Colonic mucosa (tissue), 4 donors: ENCODE measurements at regions of chr9 and their contacts with region 1.

Region 1: GRCh38 chr9:19028835-19029451 is 4.1 kb downstream of the SAXO1 start:
- DNase-seq: peak; percentile 62
- H3K4me3 ChIP-seq: no peak overlapping the region
- H3K27ac ChIP-seq: no peak overlapping the region
- H3K4me1 ChIP-seq: no peaks in the 10 kb centered on the region
- H3K27me3 ChIP-seq: no peaks in the 10 kb centered on the region
- CTCF ChIP-seq: peak; percentile 75

Region 2: DNA sequence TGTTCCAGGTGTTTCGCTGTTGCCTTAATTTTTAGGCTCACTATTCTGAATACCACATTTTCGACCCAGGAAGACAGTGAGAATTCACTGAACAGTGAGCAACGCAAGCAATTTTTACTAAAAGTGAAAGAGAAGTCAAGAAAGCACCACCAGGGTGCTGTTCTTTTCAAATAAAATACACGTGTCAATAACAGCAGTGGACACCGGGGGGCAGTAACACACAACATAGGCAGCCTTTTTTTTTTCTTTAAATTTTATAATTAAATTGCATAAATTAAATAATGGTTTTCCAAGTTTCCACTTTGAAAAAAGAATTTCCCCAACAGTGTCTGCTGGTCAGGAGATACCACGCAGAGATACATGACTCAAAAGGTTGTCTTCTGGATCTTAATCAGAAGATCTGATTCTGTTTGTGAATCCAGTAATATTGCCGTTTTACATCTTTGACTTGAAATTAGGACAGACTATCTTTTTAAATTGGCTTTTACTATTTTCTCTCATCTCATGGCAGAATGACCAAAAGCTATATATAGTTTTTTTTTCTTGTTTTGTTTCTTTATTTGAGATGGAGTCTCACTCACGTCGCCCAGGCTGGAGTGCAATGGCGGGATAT is 1497.2 kb before region 1 on chr9:
- intact Hi-C with region 1: loop called (anchors 10 kb)
- DNase-seq: peak; percentile 50
- H3K4me3 ChIP-seq: no peak overlapping the region
- H3K27ac ChIP-seq: no peak overlapping the region
- H3K4me1 ChIP-seq: no peaks in the 10 kb centered on the region
- H3K27me3 ChIP-seq: no peaks in the 10 kb centered on the region
- CTCF ChIP-seq: peak; percentile 54

Region 3: GRCh38 chr9:18255158-18255629 is 773.7 kb before region 1 on chr9:
- intact Hi-C with region 1: loop called (anchors 5 kb)
- DNase-seq: peak; percentile 82
- H3K4me3 ChIP-seq: no peak overlapping the region
- H3K27ac ChIP-seq: no peak overlapping the region
- H3K4me1 ChIP-seq: no peaks in the 10 kb centered on the region
- H3K27me3 ChIP-seq: no peaks in the 10 kb centered on the region
- CTCF ChIP-seq: peak; percentile 96

Region 4: DNA sequence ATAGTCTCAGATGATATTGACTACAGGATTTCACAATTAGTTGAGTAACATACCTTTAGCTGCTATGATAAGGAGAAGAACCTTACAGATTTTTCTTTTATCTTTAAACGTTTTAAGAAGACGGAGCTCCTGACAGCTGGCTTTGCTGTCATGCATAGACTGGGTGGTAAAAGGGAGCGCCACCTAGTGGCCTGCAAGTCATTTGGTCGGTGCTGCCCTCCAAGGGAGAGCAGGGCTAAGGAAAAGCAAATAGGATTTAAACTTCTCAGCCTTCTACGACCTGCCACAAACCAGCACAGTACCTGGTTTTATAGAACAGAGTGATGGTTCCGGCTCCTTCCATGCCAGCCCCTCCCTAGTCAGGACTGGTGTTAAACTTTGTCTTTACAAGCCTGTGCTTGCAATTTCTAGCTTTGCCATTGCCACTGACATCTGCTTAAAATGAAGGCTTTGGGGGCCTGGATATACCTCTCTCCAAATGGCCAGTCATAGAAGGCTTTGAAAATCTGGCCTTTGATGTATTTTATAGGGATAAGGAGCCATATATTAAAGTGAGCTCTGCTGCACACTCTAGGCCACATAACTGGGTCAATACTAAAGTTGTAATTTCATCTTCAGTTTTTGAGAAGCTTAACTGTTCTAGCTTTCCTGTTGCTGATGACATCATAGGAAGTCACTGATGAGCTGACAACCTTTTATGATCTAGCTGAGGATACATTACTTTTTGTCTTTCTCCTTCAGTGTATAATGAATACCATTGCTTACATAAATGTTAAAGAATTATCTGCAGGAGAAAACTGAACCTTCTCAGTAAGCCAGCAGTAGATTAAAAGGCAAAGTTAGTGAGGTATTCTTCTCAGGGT is 586.1 kb before region 1 on chr9:
- intact Hi-C with region 1: loop called (anchors 10 kb)
- DNase-seq: peak; percentile 70
- H3K4me3 ChIP-seq: no peak overlapping the region
- H3K27ac ChIP-seq: no peak overlapping the region
- H3K4me1 ChIP-seq: no peaks in the 10 kb centered on the region
- H3K27me3 ChIP-seq: no peaks in the 10 kb centered on the region
- CTCF ChIP-seq: peak; percentile 79

Region 5: DNA sequence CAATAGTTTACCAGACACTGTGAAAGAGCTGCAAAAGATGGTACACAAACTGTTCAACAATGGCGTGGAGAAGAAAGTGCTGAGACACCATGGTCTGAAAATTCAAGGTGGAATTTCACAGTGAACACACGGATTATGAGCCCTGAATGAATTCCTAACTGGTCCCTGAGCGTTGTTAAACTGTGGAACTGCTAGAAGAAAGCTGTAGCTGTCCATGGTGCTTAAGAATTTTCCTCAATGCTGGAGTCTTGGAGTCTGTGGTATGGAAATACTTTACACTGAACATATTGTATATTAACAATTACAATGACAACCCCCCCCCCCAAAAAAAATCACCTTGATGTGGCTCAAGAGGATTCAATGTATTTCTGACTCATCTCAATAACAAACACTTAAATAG is 691.4 kb after region 1 on chr9:
- intact Hi-C with region 1: no loop called
- DNase-seq: no peak
- H3K4me3 ChIP-seq: no peak overlapping the region
- H3K27ac ChIP-seq: no peak overlapping the region
- H3K4me1 ChIP-seq: no peaks in the 10 kb centered on the region
- H3K27me3 ChIP-seq: no peaks in the 10 kb centered on the region
- CTCF ChIP-seq: no peak